ENCODE measurements at regions of chr18 and their contacts with region 1.

Region 1: GRCh38 chr18:23422672-23423418 is 30.2 kb upstream of the RIOK3 start:
- ATAC-seq: peak; percentile 14 to 98 (median 44)
- H3K4me3 ChIP-seq: no peak overlapping the region
- H3K27ac ChIP-seq: no peak overlapping the region
- H3K4me1 ChIP-seq: peaks cover 8 to 11% of the 10 kb centered on the region in 2 donors

Region 2: DNA sequence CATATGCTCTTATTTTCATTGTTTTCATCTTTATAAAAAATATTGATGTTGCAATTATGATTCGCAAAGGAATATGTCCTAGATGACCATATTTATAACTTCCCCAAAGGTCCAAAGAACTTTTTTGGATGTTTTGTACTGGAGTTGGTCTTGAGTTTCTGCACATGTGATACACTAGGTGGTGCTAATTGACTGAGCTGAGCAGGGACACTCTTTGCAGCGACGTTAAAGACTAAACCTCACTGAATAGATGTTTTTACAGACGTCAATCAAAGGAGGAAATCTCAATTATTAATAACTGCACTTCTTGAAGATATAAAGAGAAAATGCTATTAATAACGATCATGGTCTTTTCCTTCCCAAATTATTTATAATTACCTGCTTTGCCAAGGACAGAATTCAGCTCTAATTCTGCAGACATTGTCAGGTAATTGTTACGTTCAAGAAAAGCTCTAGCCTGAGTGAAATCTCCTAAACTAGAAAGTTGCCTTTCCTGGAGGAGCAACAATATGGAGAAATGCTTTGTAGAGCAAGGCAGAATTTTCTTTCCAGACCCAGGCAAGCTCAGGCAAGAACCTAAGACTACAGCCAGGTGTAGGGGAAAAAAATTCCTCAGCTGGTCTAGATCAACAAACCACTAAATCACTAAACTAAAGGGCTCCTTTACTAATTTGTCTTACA is 609.1 kb before region 1 on chr18:
- in situ Hi-C with region 1: loop called in 2 of 9 experiments (anchors 25 kb)
- ATAC-seq: peak in 4 of 8 experiments; percentile 45 to 77 (median 56)
- H3K4me3 ChIP-seq: no peak overlapping the region
- H3K27ac ChIP-seq: no peak overlapping the region
- H3K4me1 ChIP-seq: no peaks in the 10 kb centered on the region

Region 3: GRCh38 chr18:23032030-23032582 is 390.7 kb before region 1 on chr18:
- in situ Hi-C with region 1: loop called in 1 of 9 experiments (anchors 25 kb)
- ATAC-seq: no peak
- H3K4me3 ChIP-seq: no peak overlapping the region
- H3K27ac ChIP-seq: no peak overlapping the region
- H3K4me1 ChIP-seq: peaks cover 0 to 4% of the 10 kb centered on the region in 2 donors

Region 4: DNA sequence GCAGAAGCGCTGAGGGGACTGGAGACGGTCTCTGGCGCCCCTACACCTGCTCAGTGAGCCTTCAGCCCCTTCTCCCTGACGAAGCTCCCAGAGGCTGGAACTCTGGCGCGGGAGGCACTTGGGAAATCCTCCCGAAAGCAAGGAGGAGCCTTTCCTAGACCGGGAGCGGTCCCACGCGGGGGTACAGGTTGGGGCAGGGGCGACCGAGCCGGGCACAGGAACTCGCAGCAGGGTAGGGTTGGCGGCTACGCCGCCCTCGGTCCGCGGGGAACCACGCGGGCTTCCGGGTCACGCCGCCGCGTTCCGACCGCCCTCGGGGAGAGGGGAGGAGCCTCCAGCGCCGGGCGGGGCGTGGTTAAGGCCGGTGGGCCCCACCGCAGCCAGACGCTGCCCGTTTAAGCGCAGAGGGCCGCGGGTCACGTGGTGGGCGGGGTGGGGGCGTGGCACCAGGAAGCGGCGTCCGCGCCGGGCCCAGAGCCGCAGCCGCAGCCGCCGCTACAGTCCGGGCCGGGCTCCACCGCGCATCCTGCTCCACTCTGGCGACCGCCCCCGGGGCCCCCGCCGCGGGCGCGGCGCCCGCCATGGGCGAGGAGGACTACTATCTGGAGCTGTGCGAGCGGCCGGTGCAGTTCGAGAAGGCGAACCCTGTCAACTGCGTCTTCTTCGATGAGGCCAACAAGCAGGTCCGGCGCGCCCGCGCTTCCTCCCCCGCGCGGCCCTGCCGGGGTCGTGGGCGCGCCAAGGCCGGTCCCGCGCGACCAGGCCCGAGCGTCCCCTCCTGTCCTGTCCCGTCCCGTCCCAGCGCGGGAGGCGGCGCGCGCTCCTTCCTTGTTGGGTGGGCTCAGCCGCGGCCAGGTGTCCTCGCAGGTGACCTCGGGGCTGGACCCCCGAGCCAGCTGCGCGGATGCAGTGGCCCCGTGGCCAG is 80.5 kb after region 1 on chr18 and contains the start of gene RMC1:
- in situ Hi-C with region 1: no loop called
- ATAC-seq: peak; percentile 84 to 95 (median 94)
- H3K4me3 ChIP-seq: peak within 1 kb of the TSS; percentile 61 to 88 (median 86)
- H3K27ac ChIP-seq: peak within 1 kb of the TSS; percentile 67 to 69
- H3K4me1 ChIP-seq: peaks cover 0 to 10% of the 10 kb centered on the region in 2 donors
- total RNA-seq, gene RMC1: 13.7 to 48.2 (median 23.4) TPM

Region 5: GRCh38 chr18:23547846-23548245 is 125.0 kb after region 1 on chr18:
- in situ Hi-C with region 1: no loop called
- ATAC-seq: peak in 5 of 8 experiments; percentile 29 to 97 (median 45)
- H3K4me3 ChIP-seq: no peak overlapping the region
- H3K27ac ChIP-seq: no peak overlapping the region
- H3K4me1 ChIP-seq: no peaks in the 10 kb centered on the region

Measured in motor neuron (in vitro differentiated cells).